Activated naive CD4-positive, alpha-beta T cell treated with anti-CD3 and anti-CD28 coated beads for 36 hours (primary cell): ENCODE measurements at regions of chr3 and their contacts with region 1.

Region 1: DNA sequence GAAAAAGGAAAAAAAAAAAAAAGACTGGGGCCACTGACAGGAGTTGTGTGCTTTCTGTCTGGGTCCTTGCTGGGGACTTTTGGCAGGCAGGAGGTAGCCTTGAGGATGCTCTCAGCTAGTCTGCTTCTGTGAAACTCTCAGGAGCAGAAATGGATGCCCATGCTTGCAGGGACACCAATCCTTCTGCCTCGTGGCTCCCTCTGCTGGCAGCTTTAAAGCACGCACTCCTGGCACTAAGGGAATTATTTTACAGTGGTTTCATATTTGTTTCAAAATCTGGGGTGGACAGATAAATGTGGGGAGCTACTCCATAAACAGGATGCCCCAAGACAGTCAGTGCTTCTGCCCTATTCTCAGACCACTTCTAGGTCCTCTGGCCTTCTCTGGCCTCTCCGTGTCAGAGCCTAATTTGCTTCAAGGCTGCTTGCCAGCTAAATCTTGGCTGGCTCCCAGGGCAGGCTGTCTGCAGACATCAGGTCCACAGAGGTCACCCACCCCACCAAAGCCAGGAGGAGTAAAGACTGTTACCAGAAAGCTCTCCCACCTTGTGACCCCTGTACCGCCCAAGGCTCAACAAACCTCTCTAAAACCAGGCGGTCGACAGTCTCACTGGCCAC is 17.1 kb downstream of the TRAIP start:
- DNase-seq: peak; percentile 89
- H3K4me3 Mint-ChIP-seq: no peak overlapping the region
- H3K27ac Mint-ChIP-seq: no peak overlapping the region
- H3K4me1 Mint-ChIP-seq: no peaks in the 10 kb centered on the region
- H3K27me3 Mint-ChIP-seq: no peaks in the 10 kb centered on the region

Region 2: DNA sequence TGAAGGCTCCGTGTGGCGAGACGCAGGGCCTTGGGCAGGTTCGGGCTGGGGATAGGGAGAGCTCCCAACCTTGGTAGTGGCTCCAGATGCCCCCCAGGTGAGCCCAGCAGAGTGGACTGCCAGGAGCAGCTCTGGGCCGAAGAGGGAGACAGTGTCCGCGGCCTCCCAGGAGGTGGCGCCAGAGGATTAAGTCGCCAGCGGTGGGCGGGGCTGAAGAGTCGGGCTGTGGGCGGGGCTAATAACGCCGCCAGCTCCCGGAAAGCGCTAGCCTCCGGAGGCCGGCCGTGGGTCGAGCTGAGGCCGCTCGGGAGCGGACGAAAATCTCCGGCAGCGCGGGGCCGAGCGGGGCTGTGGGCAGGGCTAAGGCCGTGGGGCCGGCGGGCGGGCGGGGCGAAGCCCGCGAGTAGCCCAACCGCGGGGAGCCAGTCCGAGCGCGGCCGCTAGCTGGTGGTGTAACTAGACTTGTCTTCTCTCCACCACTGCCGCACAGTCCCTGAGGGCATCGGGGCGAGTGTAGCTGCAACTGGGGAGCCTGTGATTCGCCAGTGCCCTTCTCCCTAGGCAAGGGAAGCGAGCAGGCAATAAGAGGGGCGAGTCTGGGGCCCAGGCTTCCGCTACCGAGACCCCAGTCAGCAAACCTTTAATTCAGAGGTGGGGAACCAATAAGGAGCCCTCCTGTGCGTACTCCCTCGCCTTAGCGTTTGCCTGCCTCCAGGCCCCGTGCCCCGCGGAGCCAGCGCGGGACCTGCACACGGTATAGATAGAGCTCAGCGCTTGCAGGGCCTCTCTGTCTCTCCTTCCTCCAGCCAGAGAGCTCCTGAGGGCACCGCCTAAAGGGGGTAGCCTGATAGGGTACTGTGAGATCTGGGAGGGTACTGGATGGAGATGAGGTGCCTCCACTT is 299.4 kb before region 1 on chr3:
- CTCF ChIA-PET with region 1: interaction called, 4 read pairs
- intact Hi-C with region 1: loop called (anchors 1 kb)
- DNase-seq: peak; percentile 93
- H3K4me3 Mint-ChIP-seq: peak overlapping the region; percentile 69
- H3K27ac Mint-ChIP-seq: no peak overlapping the region
- H3K4me1 Mint-ChIP-seq: peaks cover 2% of the 10 kb centered on the region
- H3K27me3 Mint-ChIP-seq: no peaks in the 10 kb centered on the region

Region 3: DNA sequence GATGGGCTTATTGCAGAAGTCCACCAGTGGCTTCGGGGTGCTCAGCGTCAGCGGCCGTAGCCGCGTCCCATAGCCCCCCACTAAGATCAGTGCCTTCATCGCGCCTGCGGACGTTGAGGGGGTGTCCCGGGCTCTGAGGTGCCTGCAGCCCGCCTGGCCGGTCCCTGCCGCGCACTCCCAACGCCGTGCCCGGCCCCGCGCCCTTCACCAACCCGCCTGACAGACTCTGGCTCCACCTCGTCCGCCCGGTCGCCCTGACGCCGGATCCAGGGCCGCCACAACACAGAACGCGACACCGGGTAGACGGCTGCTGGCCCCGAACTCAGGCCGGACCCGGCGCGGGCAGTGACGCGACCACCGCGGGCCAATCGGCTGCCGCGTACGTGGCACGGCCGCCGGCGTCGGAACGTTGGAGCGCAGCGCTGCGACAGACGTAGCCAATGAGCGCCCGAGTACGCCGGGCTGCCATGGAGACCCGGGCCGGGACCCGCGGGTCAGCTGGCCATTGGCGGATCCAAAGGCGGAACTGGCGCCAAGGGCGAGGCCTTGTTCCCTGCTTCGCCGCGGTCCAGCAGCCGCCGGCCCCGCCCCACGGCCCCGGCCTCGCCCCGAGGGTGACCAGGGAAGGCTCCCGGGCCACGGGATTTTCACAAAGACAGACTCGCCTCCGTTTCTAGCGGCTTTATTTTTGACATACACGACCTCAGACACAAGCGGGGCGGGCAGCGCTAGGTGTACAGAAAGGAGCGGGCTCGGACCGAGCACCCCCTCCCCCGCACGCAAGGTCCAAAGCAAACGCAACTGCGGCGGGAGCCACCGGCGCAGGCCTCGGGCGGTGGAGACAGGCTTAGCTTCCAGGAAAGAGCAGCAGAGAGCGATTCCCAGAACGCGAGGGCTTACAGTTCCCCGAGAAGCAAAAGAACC is 115.4 kb before region 1 on chr3 and contains the start of gene GMPPB:
- CTCF ChIA-PET with region 1: interaction called, 5 read pairs
- intact Hi-C with region 1: loop called (anchors 1 kb)
- DNase-seq: peak; percentile 96
- H3K4me3 Mint-ChIP-seq: peak within 1 kb of the TSS; percentile 96
- H3K27ac Mint-ChIP-seq: peak within 1 kb of the TSS; percentile 95
- H3K4me1 Mint-ChIP-seq: peaks cover 33% of the 10 kb centered on the region
- H3K27me3 Mint-ChIP-seq: no peaks in the 10 kb centered on the region
- total RNA-seq, gene GMPPB: 25.6 to 27.4 TPM

Region 4: DNA sequence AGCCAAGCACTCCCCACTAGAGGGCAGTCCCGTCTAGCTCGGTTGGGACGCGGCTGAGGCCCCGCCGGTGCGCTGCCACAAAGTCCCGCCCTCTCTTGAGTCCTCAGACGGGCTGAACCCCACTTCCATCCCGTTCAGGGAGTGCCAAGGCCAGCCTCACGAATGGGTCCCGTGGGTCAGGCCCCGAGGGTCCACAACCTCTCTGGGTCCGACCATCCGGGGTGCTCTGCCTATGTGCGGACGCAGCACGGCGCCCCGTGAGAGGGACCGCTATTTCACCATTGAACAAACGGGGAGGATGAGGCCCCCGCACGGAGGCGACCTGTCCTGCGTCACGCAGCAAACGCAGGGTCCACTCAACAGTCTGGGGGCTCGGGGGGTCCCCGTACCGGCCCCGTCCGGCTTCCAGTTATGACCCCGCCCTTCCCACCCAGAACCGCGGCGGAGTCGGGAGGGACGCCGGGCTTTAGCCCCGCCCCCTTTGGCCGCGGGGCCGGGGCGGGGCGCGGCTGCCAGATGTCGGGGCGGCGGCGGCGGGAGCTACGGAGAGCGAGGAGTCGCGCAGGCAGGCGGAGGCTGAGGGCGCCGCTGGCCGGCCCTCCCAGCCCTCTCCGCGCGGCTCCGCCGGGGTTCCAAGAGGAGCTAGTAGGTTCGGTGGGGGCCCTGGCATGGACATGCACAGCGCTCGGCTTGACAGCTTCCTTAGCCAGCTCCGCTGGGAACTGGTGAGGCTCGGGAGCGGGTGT is 36.4 kb before region 1 on chr3 and contains the start of gene INKA1:
- CTCF ChIA-PET with region 1: interaction called, 165 read pairs
- intact Hi-C with region 1: loop called (anchors 1 kb)
- DNase-seq: peak; percentile 93
- H3K4me3 Mint-ChIP-seq: peak within 1 kb of the TSS; percentile 82
- H3K27ac Mint-ChIP-seq: peak within 1 kb of the TSS; percentile 54
- H3K4me1 Mint-ChIP-seq: peaks cover 41% of the 10 kb centered on the region
- H3K27me3 Mint-ChIP-seq: peaks cover 2% of the 10 kb centered on the region
- total RNA-seq, gene INKA1: 0.33 to 0.37 TPM

Region 5: GRCh38 chr3:49864505-49864904 is 25.2 kb after region 1 on chr3:
- CTCF ChIA-PET with region 1: interaction called, 13 read pairs
- intact Hi-C with region 1: no loop called
- DNase-seq: no peak
- H3K4me3 Mint-ChIP-seq: no peak overlapping the region
- H3K27ac Mint-ChIP-seq: no peak overlapping the region
- H3K4me1 Mint-ChIP-seq: no peaks in the 10 kb centered on the region
- H3K27me3 Mint-ChIP-seq: peaks cover 19% of the 10 kb centered on the region